KBM-7 (cell line): ENCODE measurements at regions of chr1 and their contacts with region 1.

Region 1: GRCh38 chr1:116498789-116499628 is 71.8 kb downstream of the CD58 start:
- DNase-seq: peak; percentile 85

Region 2: GRCh38 chr1:116168277-116169097 is 330.5 kb before region 1 on chr1:
- in situ Hi-C with region 1: loop called (anchors 10 kb)
- DNase-seq: peak; percentile 84